Activated CD4-positive, alpha-beta memory T cell treated with anti-CD3 and anti-CD28 coated beads for 36 hours (primary cell): ENCODE measurements at regions of chr11 and their contacts with region 1.

Region 1: GRCh38 chr11:61947486-61948210 is 2.5 kb upstream of the BEST1 start:
- DNase-seq: peak; percentile 80
- H3K4me3 Mint-ChIP-seq: no peak overlapping the region
- H3K27ac Mint-ChIP-seq: no peak overlapping the region
- H3K4me1 Mint-ChIP-seq: no peaks in the 10 kb centered on the region
- H3K27me3 Mint-ChIP-seq: peaks cover 2% of the 10 kb centered on the region

Region 2: DNA sequence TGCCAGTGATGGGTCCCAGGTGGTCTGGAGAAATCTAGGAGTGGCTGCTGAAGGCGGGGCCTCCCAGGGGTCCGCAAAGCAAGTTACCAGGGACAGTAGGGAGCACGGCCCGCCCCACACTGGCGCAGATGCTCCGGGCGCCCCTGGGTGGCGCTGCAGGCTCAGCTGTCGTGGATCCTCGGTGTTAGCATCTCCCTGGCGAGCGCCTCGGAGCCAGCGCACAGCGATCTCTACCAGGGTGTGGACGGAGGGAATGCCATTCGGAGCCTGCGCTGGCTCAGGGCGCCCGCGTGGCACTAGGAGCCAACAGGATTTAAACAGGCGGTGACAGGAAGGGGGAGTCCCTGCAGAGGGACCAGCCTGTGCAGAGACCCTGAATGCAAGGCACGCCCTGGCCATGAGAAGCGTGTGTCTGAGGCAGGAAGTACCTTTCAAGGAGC is 76.5 kb before region 1 on chr11:
- CTCF ChIA-PET with region 1: interaction called, 21 read pairs
- POLR2A ChIA-PET with region 1: no interaction called
- intact Hi-C with region 1: loop called (anchors 2 kb)
- DNase-seq: peak; percentile 80
- H3K4me3 Mint-ChIP-seq: no peak overlapping the region
- H3K27ac Mint-ChIP-seq: no peak overlapping the region
- H3K4me1 Mint-ChIP-seq: peaks cover 2% of the 10 kb centered on the region
- H3K27me3 Mint-ChIP-seq: peaks cover 2% of the 10 kb centered on the region

Region 3: GRCh38 chr11:61961570-61962212 is 14.0 kb after region 1 on chr11:
- CTCF ChIA-PET with region 1: interaction called, 11 read pairs
- POLR2A ChIA-PET with region 1: interaction called, 4 read pairs
- intact Hi-C with region 1: no loop called
- DNase-seq: peak; percentile 8
- H3K4me3 Mint-ChIP-seq: no peak overlapping the region
- H3K27ac Mint-ChIP-seq: no peak overlapping the region
- H3K4me1 Mint-ChIP-seq: peaks cover 39% of the 10 kb centered on the region
- H3K27me3 Mint-ChIP-seq: no peaks in the 10 kb centered on the region

Region 4: DNA sequence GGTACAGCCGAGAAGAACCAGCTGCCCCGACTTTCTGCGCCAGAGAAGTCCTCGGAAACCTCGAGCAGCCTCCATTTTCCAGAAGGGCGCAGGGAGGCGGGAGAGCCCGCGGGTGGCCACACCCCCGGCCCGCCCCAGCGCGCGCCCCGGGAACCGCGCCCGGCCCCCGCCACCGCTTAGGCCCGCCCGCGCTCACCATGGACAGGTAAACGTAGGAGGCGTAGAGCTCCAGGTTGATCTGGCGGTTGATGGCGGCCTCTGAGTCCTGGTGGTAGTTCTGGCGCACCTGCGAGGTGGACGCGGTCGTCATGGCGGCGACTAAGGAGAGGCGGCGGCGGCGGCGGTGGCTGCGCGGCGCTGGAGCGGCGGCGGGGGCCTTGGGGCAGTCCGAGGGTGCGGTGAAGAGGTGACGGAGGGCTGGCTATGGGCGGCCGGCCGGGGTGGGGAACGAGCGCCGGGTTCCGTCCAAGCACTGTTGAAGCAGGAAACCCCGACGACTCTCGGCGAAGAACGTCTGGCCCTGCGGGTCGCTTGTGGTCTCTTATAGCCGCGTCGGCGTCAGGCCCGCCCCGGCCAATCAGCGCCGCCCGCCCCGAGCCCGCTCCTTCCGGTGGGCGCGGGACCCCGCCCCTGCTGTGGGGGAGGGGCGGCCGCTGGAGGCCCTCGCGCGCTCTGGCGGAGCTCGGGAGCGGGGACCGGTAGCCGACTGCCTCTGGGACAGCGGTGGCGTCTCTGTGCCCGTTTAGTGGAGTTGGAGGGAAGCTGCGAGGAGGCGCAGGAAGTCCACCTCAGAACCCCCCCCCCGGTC is 19.7 kb after region 1 on chr11 and contains the start of gene FTH1:
- CTCF ChIA-PET with region 1: interaction called, 14 read pairs
- POLR2A ChIA-PET with region 1: interaction called, 4 read pairs
- intact Hi-C with region 1: no loop called
- DNase-seq: peak; percentile 90
- H3K4me3 Mint-ChIP-seq: peak within 1 kb of the TSS; percentile 84
- H3K27ac Mint-ChIP-seq: peak within 1 kb of the TSS; percentile 93
- H3K4me1 Mint-ChIP-seq: peaks cover 68% of the 10 kb centered on the region
- H3K27me3 Mint-ChIP-seq: no peaks in the 10 kb centered on the region
- total RNA-seq, gene FTH1: 915 to 922 TPM